Posterior cingulate gyrus (tissue), 11 donors: ENCODE measurements at regions of chr9 and their contacts with region 1.

Region 1: DNA sequence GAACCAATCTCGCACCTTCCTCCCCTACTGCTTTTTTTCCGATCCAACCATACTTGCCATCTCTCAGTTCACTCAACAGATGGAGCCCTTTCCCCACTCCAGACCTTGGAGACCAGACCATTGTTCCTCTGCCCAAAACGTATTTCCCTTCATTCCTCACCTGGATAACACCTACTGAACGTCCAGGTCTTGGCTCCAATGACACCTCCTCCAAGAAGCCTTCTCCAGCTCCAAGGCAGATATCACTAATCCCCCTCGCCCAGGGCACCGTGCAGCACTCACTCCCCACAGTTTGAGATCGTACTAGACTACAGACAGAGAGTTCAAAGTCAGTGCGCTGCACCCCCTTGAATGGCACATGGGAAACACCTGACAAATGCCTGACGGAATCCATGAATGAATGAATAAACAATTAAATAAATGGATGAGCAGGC is 47.1 kb upstream of the AKNA start:
- DNase-seq: peak in 4 of 10 donors; percentile 14 to 59 (median 34)

Region 2: DNA sequence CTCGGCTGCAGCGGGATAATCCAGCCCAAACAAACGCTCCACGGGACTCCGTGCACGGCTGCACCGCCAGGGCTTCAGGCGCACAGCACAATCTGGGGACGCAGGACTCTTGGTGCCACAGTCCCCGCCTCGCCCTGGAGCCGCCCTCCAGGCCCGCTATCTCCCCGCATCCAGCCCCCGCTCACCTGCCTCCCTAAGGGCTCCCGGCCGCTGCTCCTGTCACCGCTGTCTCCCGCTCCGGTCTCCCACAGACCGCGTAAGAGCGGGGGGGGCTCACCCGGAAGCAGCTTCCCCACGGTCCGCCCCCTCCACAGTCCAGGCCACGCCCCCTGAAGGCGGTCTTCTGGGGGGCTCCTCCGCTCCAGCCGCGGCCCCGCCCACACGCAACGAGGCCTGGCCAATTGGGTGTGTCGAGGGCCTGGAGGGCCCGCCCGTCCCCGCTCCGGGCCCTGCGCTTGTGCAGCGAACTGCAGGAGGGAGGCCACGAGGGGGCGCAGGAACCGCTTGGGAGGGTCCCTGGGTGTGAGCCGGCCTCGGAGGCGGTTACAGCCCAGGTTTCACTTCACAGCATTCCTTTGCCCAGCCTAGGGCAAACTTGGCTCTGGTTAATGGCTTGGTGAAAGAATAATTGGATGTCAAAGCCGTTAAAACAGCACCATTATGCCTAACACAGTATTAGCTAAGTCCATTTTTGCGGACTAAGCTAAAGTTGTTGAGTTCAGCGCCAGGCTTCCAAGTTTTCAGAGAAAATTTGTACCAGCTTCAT is 1033.7 kb before region 1 on chr9 and contains the start of gene ALAD:
- intact Hi-C with region 1: no loop called
- DNase-seq: peak; percentile 98 to 100 (median 100)

Region 3: DNA sequence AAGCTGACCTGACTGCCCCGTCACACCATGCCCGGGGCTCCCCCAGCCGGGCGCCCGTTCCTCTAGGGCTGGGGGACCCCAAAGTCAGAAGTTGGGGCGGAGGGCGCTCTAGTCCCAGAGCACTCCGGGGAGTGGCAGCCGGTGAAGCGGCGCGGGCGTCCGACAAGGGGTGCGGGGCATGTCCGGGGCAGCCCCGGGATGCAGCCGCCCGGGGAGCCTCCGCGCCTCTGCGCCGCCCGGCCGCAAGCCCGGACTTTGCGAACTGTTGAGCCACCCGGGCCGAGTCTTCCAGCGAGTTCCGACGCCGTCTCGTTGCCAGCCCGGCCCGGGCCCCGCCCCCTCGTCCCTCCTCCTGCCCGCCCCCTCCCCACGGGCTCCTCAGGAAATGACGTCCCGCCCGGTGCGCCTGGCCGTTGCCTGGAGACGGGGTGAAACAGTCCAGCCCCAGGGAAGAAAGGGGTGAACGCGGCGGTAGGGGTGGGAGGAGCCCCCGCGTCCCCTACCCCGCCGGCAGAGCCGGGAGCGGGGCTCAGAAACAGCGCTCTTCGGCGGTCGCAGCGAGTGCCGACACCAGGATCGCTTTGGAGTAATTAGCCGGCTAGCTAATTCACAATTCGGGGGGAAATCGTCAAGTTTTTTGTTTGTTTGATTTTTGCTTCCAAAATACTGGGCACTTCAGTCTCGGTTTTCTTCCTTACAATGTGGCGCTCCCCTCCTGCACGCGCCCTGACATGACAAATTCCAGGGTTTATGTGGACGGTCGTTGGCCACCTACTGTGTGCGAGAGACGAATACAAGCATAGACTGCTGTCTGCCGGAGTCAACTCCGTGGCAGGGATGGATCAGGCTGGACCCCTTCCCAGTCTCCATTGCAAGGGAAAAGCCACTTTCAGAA is 70.5 kb after region 1 on chr9 and contains the start of gene WHRN:
- intact Hi-C with region 1: loop called (anchors 2 kb)
- DNase-seq: peak; percentile 83 to 99 (median 90)